ENCODE measurements at regions of chr12 and their contacts with region 1.

Region 1: GRCh38 chr12:50763639-50764285 is at the start of gene ATF1:
- DNase-seq: peak; percentile 83 to 91
- H3K4me3 ChIP-seq: peak within 1 kb of the TSS; percentile 64 to 94 (median 72)
- H3K27ac ChIP-seq: peak within 1 kb of the TSS; percentile 97
- H3K4me1 ChIP-seq: peaks cover 0 to 7% (median 3%) of the 10 kb centered on the region in 4 experiments; a peak in 4 of 7 replicates
- H3K27me3 ChIP-seq: no peaks in the 10 kb centered on the region
- CTCF ChIP-seq: no peak
- EP300 ChIP-seq: no peak
- POLR2A ChIP-seq: peak; percentile 83 to 86
- RAD21 ChIP-seq: no peak
- total RNA-seq, gene ATF1: 41.6 and 41.8 TPM in 2 replicates

Region 2: GRCh38 chr12:50751948-50752721 is 11.6 kb before region 1 on chr12:
- CTCF ChIA-PET with region 1: interaction called, 6 read pairs
- POLR2A ChIA-PET with region 1: interaction called, 22 read pairs
- DNase-seq: no peak
- H3K4me3 ChIP-seq: no peak overlapping the region
- H3K27ac ChIP-seq: no peak overlapping the region
- H3K4me1 ChIP-seq: no peaks in the 10 kb centered on the region
- H3K27me3 ChIP-seq: no peaks in the 10 kb centered on the region
- CTCF ChIP-seq: no peak
- EP300 ChIP-seq: no peak
- POLR2A ChIP-seq: no peak
- RAD21 ChIP-seq: no peak

Region 3: DNA sequence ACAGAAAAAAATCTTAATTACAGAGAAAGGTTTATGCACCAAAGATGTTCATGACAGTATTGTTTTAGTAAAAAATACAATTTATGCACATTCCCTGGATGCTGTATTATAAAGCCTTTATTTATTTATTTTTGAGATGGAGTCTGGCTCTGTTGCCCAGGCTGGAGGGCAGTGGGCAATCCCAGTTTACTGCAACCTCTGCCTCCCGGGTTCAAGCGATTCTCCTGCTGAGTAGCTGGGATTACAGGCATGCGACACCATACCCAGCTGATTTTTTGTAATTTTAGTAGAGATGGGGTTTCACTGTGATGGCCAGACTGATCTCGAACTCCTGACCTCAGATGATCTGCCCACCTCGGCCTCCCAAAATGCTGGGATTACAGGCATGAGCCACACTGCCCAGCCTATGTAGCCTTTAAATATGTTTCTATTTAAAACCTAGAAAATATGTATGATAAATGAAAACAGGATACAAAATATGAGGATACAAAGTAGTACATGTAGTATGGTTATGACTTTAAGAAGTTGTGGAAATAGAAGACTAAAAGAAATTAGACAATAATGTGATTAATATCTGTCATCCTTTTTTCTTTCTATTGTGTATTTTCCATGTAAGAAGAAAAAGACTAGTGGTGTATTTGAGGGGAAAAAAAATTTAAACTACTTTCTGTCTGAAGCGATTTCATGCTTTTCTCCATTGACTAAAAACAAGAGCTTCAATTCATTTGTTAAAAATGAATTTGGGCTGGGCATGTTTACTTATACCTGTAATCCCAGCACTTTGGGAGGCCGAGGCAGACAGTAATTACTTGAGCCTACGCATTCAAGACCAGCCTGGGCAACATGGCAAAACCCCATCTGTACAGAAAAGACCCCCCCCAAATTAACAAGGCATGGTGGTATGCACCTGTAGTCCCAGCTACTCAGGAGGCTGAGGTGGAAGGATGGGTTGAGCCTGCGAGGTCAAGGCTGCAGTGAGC is 13.3 kb after region 1 on chr12:
- CTCF ChIA-PET with region 1: interaction called, 9 read pairs
- POLR2A ChIA-PET with region 1: interaction called, 12 read pairs
- DNase-seq: no peak
- H3K4me3 ChIP-seq: no peak overlapping the region
- H3K27ac ChIP-seq: no peak overlapping the region
- H3K4me1 ChIP-seq: no peaks in the 10 kb centered on the region
- H3K27me3 ChIP-seq: no peaks in the 10 kb centered on the region
- CTCF ChIP-seq: no peak
- EP300 ChIP-seq: no peak
- POLR2A ChIP-seq: no peak
- RAD21 ChIP-seq: no peak